H1 (cell line): ENCODE measurements at regions of chr16 and their contacts with region 1.

Region 1: GRCh38 chr16:26765087-26765486 is 301.6 kb upstream of the C16orf82 start:
- DNase-seq: peak in 1 of 2 experiments; percentile 49
- H3K4me3 ChIP-seq: no peak overlapping the region
- H3K27ac ChIP-seq: no peak overlapping the region
- H3K4me1 ChIP-seq: no peaks in the 10 kb centered on the region
- H3K27me3 ChIP-seq: no peaks in the 10 kb centered on the region; a peak in 2 of 7 replicates
- CTCF ChIP-seq: peak; percentile 23 to 81 (median 74)
- EP300 ChIP-seq: no peak
- POLR2A ChIP-seq: no peak
- RAD21 ChIP-seq: peak; percentile 30 to 46; a peak in 3 of 4 replicates

Region 2: DNA sequence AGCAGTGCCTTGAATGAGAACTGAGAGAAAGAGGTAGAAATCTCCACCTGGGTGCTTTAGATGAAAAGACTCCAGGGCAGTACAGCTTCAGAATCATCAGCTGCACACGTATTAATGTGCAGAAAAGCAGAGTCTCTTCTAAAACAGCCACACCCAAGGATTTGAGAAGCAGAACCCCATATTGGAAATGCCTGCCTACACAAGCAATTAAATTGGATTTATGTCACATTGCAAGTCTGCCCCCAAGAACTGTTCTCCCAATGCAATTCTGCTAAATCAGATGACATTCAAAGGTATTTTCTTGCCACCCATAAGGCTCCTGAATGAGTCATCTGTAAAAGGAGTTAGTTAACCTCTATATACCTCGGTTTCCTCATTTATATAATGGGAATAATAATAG is 24.3 kb before region 1 on chr16:
- CTCF ChIA-PET with region 1: no interaction called
- POLR2A ChIA-PET with region 1: no interaction called
- DNase-seq: no peak
- H3K4me3 ChIP-seq: no peak overlapping the region
- H3K27ac ChIP-seq: no peak overlapping the region
- H3K4me1 ChIP-seq: no peaks in the 10 kb centered on the region
- H3K27me3 ChIP-seq: no peaks in the 10 kb centered on the region; a peak in 1 of 7 replicates
- CTCF ChIP-seq: no peak
- EP300 ChIP-seq: no peak
- POLR2A ChIP-seq: no peak
- RAD21 ChIP-seq: no peak

Region 3: GRCh38 chr16:26752170-26752569 is 12.9 kb before region 1 on chr16:
- CTCF ChIA-PET with region 1: interaction called, 20 read pairs
- POLR2A ChIA-PET with region 1: no interaction called
- DNase-seq: no peak
- H3K4me3 ChIP-seq: no peak overlapping the region
- H3K27ac ChIP-seq: no peak overlapping the region
- H3K4me1 ChIP-seq: no peaks in the 10 kb centered on the region; a peak in 1 of 7 replicates
- H3K27me3 ChIP-seq: peaks cover 28 to 68% (median 52%) of the 10 kb centered on the region in 4 experiments
- CTCF ChIP-seq: no peak
- EP300 ChIP-seq: no peak
- POLR2A ChIP-seq: no peak
- RAD21 ChIP-seq: no peak

Region 4: GRCh38 chr16:26826500-26826899 is 61.4 kb after region 1 on chr16:
- CTCF ChIA-PET with region 1: no interaction called
- POLR2A ChIA-PET with region 1: no interaction called
- DNase-seq: no peak
- H3K4me3 ChIP-seq: no peak overlapping the region
- H3K27ac ChIP-seq: no peak overlapping the region
- H3K4me1 ChIP-seq: no peaks in the 10 kb centered on the region; a peak in 1 of 7 replicates
- H3K27me3 ChIP-seq: no peaks in the 10 kb centered on the region
- CTCF ChIP-seq: no peak
- EP300 ChIP-seq: no peak
- POLR2A ChIP-seq: no peak
- RAD21 ChIP-seq: no peak